ENCODE measurements at regions of chr12 and their contacts with region 1.

Region 1: DNA sequence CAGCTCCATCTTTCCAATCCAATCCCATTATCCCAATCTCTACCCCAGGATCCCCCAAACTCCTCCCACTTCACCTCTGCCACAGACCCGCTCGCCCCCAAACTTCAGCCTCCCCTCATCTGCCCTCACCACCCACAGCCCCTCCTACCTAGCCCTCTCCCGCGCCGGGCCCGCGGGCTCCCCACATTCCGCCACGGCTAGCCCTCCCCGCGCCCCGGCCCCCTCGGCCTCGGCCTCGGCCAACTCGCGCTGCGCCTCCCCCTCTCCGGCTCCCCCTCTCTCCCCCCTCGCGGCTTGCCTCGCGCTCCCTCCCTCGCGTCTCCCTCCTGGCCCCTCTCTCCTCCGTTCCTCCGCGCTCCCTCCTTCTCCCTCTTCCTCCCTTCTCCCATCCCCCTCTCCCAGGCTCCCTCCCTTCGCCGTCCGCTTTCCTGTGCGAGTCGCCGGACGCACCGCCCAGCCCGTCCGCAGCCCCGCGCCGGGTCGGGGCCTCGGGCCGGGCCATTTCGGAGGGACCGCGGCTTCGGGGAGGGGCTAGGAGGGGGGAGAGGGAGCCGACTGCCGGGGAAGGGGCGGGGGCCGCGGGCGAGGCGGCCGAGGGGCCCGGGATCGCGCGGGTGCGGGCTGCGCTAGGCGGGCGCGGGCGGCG is at the start of gene ATN1:
- DNase-seq: peak; percentile 65 to 88 (median 80)
- ATAC-seq: peak; percentile 28 to 55 (median 38)
- H3K4me3 ChIP-seq: peak within 1 kb of the TSS; percentile 46 to 81 (median 71)
- H3K27ac ChIP-seq: peak within 1 kb of the TSS; percentile 68 to 93 (median 88)
- H3K4me1 ChIP-seq: peaks cover 13 to 43% (median 23%) of the 10 kb centered on the region in 3 donors
- H3K27me3 ChIP-seq: no peaks in the 10 kb centered on the region
- CTCF ChIP-seq: no peak
- total RNA-seq, gene ATN1: 30.9 to 54.5 (median 36.2) TPM

Region 2: DNA sequence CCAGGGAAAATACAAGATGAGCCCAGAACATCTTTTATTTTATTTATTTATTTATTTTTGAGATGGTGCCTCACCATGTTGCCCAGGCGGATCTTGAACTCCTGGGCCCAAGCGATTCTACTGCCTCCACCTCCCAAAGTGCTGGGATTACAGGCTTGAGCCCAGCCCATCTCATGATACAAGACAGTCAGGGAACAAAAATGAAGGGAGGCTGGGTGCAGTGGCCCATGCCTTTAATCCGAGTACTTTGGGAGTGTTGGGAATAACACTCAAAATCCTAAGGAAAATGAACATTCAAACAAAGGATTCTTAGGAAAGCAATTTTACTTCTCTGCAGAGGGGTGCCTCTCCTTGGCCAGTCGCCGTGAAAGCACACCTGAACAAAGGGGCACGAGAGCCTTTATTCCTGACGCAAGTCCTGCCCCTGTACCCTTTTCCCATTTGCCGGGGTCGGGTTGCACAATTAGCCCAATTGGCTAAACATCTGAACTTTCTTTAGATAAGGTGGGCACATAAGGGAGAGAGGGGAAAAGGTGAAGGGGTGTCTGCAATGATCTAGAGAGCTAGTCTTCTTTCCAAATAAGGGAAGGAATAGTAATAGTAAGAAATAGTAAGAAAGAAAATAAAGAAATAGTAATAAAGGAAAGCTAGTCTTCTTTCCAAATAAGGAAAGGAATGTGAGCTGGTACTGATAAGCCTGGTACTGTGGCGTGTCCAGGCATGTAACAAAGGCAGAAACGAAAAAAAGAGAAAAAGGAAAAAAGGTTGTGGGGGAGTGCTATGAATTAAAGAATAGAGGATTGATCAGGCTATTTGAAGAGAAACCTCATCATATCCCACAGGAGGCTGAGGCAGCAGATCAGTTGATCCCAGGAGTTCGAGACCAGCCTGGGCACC is 420.2 kb before region 1 on chr12:
- intact Hi-C with region 1: no loop called
- DNase-seq: no peak
- ATAC-seq: no peak
- H3K4me3 ChIP-seq: no peak overlapping the region
- H3K27ac ChIP-seq: no peak overlapping the region
- H3K4me1 ChIP-seq: no peaks in the 10 kb centered on the region
- H3K27me3 ChIP-seq: no peaks in the 10 kb centered on the region
- CTCF ChIP-seq: no peak

Region 3: DNA sequence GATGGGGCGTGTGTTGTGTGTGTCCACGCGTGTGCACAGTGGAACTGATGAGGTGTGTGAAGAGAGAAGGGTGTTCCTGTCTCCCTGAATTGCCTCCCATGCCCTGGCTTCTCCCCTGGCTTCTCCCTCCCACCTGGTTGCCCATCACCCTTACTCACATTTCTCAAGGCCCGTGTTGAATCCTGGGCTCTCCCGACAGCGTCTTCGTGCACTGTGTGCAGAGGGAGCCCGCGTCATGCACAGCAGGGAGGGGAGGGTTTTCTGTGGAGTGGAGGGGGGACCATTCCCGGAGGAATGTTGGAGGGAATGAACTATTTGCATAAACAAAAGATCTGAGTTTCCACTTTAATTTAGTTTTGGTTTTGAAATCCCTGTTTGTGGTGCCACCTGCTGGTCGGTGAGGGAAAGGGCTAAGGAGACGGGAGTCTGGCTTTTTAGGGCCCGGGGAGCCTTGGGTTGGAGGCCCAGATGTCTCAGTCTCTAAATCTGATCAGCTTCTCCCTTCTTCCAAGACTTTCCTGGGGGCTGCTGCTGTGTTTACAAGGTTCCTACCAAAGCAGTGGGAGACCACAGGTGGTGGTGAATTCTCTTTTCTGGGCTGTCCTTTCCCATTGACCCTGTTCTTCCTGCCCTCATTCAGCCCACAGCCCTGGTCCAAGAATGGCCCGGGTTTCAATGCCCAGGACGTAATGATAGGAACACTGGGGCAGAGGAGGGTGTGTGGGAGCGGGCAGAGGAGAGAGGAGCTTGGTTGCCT is 164.9 kb after region 1 on chr12 and contains the start of gene C1R:
- intact Hi-C with region 1: loop called in 1 of 3 experiments (anchors 10 kb)
- DNase-seq: peak in 5 of 6 donors; percentile 58 to 84 (median 71)
- ATAC-seq: peak; percentile 55 to 82 (median 73)
- H3K4me3 ChIP-seq: peak within 1 kb of the TSS; percentile 7 to 54 (median 26)
- H3K27ac ChIP-seq: peak within 1 kb of the TSS in 2 of 4 donors; percentile 40 to 50
- H3K4me1 ChIP-seq: peaks cover 0 to 7% (median 0%) of the 10 kb centered on the region in 3 donors
- H3K27me3 ChIP-seq: no peaks in the 10 kb centered on the region
- CTCF ChIP-seq: peak; percentile 73 to 89 (median 82)
- total RNA-seq, gene C1R: 20.2 to 212 (median 66.8) TPM